Activated CD4-positive, alpha-beta T cell treated with anti-CD3 and anti-CD28 coated beads, Interleukin-2, amount 10 ng/mL, durations not matched to agents 24 days and 14 days (primary cell): ENCODE measurements at regions of chr11 and their contacts with region 1.

Region 1: GRCh38 chr11:35617687-35618496 is at the start of gene FJX1:
- DNase-seq: peak; percentile 65
- H3K4me3 Mint-ChIP-seq: peak within 1 kb of the TSS; percentile 73
- H3K27ac Mint-ChIP-seq: peak within 1 kb of the TSS; percentile 71
- H3K4me1 Mint-ChIP-seq: peaks cover 5% of the 10 kb centered on the region
- H3K27me3 Mint-ChIP-seq: peaks cover 52% of the 10 kb centered on the region
- total RNA-seq, gene FJX1: 0.26 and 0.30 TPM in 2 replicates

Region 2: GRCh38 chr11:35822815-35823495 is 205.1 kb after region 1 on chr11:
- intact Hi-C with region 1: loop called (anchors 1 kb)
- DNase-seq: no peak
- H3K4me3 Mint-ChIP-seq: no peak overlapping the region
- H3K27ac Mint-ChIP-seq: no peak overlapping the region
- H3K4me1 Mint-ChIP-seq: peaks cover 3% of the 10 kb centered on the region
- H3K27me3 Mint-ChIP-seq: peaks cover 4% of the 10 kb centered on the region

Region 3: DNA sequence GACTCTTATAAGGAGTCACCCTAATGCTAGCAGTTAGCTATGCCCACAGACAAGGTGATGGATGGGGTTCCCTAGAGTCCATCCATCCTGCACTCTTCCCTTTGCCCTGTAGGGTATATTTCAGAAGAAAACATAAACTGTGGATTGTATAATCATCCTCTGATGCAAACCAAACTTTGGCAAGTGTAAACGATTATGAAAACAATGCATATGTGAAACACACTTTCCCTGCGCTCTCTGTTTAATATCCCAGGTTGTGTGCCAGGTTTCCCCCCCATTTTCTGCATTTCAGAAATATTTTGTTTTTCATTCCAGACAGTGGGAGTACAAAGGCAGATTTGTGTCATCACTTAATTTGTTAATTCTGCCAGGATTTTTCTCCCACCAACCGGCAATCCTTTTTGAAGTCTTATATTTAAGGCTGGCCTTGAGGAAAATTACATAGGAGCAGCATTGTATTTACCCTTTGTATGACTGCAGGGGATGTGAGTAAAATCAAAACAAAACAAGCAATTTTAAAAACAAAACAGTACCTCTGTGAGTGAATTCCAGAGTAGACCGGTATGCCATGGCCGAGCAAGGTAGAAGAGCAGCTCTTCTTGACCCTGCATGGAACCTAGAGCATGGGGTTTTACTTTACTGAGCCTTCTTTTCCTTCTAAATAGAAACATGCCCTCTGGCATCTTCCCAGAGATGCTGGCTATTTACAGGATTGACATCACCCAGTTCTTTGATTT is 436.1 kb after region 1 on chr11:
- intact Hi-C with region 1: loop called (anchors 5 kb)
- DNase-seq: no peak
- H3K4me3 Mint-ChIP-seq: no peak overlapping the region
- H3K27ac Mint-ChIP-seq: no peak overlapping the region
- H3K4me1 Mint-ChIP-seq: no peaks in the 10 kb centered on the region
- H3K27me3 Mint-ChIP-seq: no peaks in the 10 kb centered on the region

Region 4: DNA sequence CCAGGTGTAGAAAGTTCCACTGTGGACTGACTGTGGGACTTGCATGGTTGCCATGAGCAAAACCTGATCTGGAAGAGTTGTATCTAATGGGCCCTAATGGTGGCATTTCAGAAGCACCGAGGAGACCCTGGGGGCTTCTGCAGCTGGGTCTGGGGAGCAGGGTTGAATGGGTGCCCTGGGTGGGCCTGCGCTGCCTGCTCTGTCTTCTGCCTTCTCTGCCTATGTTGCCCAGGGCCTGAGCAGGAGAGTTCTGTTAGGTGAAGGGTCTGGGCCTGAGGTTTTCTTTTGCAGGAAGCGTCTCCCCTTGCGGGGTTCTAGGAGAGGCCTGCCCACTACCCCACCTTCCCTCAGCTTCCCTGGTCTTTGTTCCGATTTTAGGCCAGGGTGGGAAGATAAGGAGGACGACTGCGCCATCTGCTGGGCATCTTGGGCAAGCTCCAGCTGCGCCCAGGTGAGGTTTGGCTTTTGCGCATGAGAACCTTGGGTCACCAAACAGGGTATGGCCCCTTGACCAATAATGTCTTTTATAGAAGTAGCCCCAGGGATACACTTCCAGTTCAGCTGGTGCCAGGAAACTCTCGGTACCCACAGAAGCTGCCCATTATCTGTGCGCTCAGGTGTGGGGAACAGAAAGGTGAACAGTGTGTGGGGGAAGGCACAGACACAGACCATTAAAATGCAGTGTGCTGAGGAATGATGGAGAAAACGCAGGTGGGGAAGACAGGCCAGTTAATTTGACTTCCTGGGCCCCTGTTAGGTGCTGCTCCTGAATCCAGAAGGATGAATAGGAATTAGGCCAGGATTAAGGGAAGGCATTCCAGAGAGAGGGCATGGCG is 648.1 kb after region 1 on chr11:
- intact Hi-C with region 1: loop called (anchors 1 kb)
- DNase-seq: peak; percentile 84
- H3K4me3 Mint-ChIP-seq: no peak overlapping the region
- H3K27ac Mint-ChIP-seq: no peak overlapping the region
- H3K4me1 Mint-ChIP-seq: peaks cover 3% of the 10 kb centered on the region
- H3K27me3 Mint-ChIP-seq: peaks cover 4% of the 10 kb centered on the region